AG04450 (cell line): ENCODE measurements at regions of chr1 and their contacts with region 1.

Region 1: GRCh38 chr1:197399755-197400527 is 131.9 kb downstream of the CRB1 start:
- DNase-seq: no peak
- H3K4me3 ChIP-seq: no peak overlapping the region
- H3K27ac ChIP-seq: no peak overlapping the region
- H3K27me3 ChIP-seq: no peaks in the 10 kb centered on the region
- CTCF ChIP-seq: peak; percentile 68

Region 2: DNA sequence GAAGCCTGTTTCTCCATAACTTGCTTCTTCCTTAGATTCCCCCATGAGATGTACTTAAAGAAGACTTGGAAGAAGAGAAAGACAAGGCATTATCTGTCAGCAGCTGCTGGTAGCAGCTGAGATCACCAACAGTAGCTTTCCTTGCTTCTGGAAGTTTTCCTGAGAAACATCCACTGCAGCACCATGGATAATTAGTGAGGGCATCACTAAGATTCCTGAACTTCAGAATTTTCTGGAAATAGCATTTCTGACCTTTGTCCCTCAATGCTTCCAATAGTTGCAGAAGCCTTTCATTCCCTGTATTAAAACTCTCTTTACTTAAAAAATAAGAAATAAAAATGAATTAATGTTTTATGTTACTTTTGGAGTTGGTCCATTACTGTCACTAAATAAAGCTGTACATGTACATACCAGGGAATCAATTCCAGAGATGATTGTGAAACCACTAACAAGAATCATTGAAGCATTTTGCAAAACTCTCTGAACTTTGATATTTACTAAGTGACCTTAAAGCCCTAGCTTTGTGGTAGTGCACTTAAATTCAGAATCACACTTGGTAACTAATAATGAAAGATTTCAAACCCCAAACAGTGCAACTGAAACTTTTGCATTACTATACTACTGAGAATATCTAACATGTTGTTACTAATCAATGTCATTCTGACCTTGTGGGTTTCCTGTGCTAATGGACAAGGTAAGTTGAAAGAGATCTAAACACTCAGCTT is 512.3 kb before region 1 on chr1 and contains the start of gene CFHR4:
- CTCF ChIA-PET with region 1: interaction called, 17 read pairs
- POLR2A ChIA-PET with region 1: no interaction called
- DNase-seq: no peak
- H3K4me3 ChIP-seq: no peak within 1 kb of the TSS
- H3K27ac ChIP-seq: no peak within 1 kb of the TSS
- H3K27me3 ChIP-seq: no peaks in the 10 kb centered on the region
- CTCF ChIP-seq: no peak
- polyA plus RNA-seq, gene CFHR4: not detected in 2 replicates

Region 3: DNA sequence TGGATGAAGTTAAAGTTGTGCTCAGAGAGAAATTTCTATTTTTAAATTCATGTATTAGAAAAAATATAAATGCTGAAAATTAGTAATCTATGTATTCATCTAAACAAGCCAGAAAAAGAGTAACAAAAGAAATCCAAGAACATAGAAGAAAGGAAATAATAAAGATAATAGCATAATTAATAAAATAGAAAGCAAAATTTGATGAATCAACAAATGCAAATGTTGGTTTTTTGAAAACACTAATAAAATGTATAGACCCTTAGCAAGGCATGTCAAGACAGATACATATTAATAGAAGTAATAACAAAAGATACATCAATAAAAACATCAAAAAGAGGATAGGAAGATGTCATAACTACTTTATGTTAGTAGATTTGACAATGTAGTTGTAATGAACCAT is 350.8 kb before region 1 on chr1:
- CTCF ChIA-PET with region 1: interaction called, 15 read pairs
- POLR2A ChIA-PET with region 1: no interaction called
- DNase-seq: no peak
- H3K4me3 ChIP-seq: no peak overlapping the region
- H3K27ac ChIP-seq: no peak overlapping the region
- H3K27me3 ChIP-seq: no peaks in the 10 kb centered on the region
- CTCF ChIP-seq: no peak

Region 4: DNA sequence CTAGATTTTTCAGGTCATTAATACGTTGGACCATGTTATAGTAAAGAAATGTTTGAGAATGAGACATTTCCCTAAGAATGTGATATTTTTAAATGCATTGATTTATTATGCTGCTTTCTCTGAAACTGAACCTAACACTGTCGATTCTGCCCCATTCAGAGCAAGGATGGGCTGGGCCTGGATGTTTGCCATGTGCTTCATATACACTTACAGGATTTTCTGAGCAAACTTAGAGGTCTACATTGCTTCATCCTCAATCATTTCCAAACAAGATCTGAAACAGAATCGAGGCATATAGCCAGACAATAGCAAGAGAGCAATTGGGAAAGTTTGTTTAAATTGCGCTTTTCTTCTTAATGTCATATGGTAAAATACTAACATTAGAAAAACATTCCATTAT is 51.5 kb after region 1 on chr1:
- CTCF ChIA-PET with region 1: no interaction called
- POLR2A ChIA-PET with region 1: no interaction called
- DNase-seq: no peak
- H3K4me3 ChIP-seq: no peak overlapping the region
- H3K27ac ChIP-seq: no peak overlapping the region
- H3K27me3 ChIP-seq: no peaks in the 10 kb centered on the region
- CTCF ChIP-seq: no peak